ENCODE measurements at regions of chr12 and their contacts with region 1.

Region 1: DNA sequence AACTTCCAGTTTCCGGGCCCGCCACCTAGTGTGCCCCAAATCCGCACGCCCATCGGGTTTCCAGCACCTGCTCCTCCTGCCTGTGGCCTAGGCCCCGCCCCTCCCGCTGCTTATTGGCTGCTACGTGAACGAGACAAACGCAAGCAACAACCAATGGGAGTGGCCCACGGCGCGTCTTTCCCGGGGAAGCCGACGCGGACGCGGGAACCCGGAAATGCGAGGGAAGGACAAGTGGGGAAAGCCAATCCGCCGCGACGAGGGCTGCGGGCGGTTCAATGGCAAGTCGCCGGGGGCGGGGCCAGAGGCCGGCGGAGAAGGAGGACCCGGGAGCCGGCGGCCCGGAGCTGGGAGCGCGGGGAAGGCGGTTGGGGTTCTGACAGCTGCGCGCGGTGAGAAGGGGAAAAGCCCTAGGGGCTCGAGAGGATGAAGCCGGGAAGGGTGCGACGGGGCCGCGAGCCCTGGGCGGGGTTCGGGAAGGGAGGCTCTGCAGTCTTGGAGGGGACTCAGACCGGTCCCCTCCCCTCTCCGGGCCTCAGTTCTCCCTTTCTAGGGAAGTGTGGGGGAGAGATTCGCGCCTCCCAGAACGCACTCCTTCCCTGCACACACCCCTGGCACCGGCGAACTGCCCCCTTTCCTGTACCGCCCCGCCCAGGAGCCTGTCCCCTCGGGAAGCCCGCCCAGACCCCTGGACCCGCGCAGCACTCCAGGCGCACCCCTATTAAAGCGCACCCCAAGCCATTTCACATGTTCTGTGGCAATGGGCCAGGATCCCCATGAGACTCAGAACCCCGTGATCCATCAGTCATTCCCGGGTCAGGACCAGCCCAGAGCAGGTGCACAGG is at the start of gene FICD:
- DNase-seq: peak; percentile 100
- H3K4me3 Mint-ChIP-seq: peak within 1 kb of the TSS; percentile 88
- H3K27ac Mint-ChIP-seq: peak within 1 kb of the TSS; percentile 84
- H3K4me1 Mint-ChIP-seq: peaks cover 34% of the 10 kb centered on the region
- H3K27me3 Mint-ChIP-seq: no peaks in the 10 kb centered on the region
- total RNA-seq, gene FICD: 5.7 to 6.0 TPM

Region 2: GRCh38 chr12:107685360-107686248 is 829.6 kb before region 1 on chr12 and contains the start of gene PWP1:
- CTCF ChIA-PET with region 1: no interaction called
- POLR2A ChIA-PET with region 1: no interaction called
- intact Hi-C with region 1: loop called (anchors 5 kb)
- DNase-seq: peak; percentile 96
- H3K4me3 Mint-ChIP-seq: peak within 1 kb of the TSS; percentile 92
- H3K27ac Mint-ChIP-seq: peak within 1 kb of the TSS; percentile 98
- H3K4me1 Mint-ChIP-seq: peaks cover 25% of the 10 kb centered on the region
- H3K27me3 Mint-ChIP-seq: peaks cover 1% of the 10 kb centered on the region
- total RNA-seq, gene PWP1: 44.0 to 47.0 TPM

Region 3: GRCh38 chr12:107912421-107913004 is 602.7 kb before region 1 on chr12:
- CTCF ChIA-PET with region 1: no interaction called
- POLR2A ChIA-PET with region 1: no interaction called
- intact Hi-C with region 1: loop called (anchors 5 kb)
- DNase-seq: peak; percentile 75
- H3K4me3 Mint-ChIP-seq: peak overlapping the region; percentile 71
- H3K27ac Mint-ChIP-seq: no peak overlapping the region
- H3K4me1 Mint-ChIP-seq: peaks cover 4% of the 10 kb centered on the region
- H3K27me3 Mint-ChIP-seq: peaks cover 22% of the 10 kb centered on the region

Region 4: GRCh38 chr12:108337235-108338223 is 177.7 kb before region 1 on chr12:
- CTCF ChIA-PET with region 1: interaction called, 3 read pairs
- POLR2A ChIA-PET with region 1: no interaction called
- intact Hi-C with region 1: loop called (anchors 10 kb)
- DNase-seq: peak; percentile 12
- H3K4me3 Mint-ChIP-seq: no peak overlapping the region
- H3K27ac Mint-ChIP-seq: no peak overlapping the region
- H3K4me1 Mint-ChIP-seq: peaks cover 3% of the 10 kb centered on the region
- H3K27me3 Mint-ChIP-seq: peaks cover 12% of the 10 kb centered on the region

Region 5: GRCh38 chr12:108482717-108483212 is 32.4 kb before region 1 on chr12:
- CTCF ChIA-PET with region 1: no interaction called
- POLR2A ChIA-PET with region 1: no interaction called
- intact Hi-C with region 1: no loop called
- DNase-seq: no peak
- H3K4me3 Mint-ChIP-seq: no peak overlapping the region
- H3K27ac Mint-ChIP-seq: no peak overlapping the region
- H3K4me1 Mint-ChIP-seq: no peaks in the 10 kb centered on the region
- H3K27me3 Mint-ChIP-seq: peaks cover 29% of the 10 kb centered on the region

Region 6: GRCh38 chr12:108618079-108618952 is 103.1 kb after region 1 on chr12:
- CTCF ChIA-PET with region 1: interaction called, 5 read pairs
- POLR2A ChIA-PET with region 1: no interaction called
- intact Hi-C with region 1: loop called (anchors 2 kb)
- DNase-seq: peak; percentile 84
- H3K4me3 Mint-ChIP-seq: no peak overlapping the region
- H3K27ac Mint-ChIP-seq: peak overlapping the region; percentile 25
- H3K4me1 Mint-ChIP-seq: peaks cover 54% of the 10 kb centered on the region
- H3K27me3 Mint-ChIP-seq: no peaks in the 10 kb centered on the region

Region 7: DNA sequence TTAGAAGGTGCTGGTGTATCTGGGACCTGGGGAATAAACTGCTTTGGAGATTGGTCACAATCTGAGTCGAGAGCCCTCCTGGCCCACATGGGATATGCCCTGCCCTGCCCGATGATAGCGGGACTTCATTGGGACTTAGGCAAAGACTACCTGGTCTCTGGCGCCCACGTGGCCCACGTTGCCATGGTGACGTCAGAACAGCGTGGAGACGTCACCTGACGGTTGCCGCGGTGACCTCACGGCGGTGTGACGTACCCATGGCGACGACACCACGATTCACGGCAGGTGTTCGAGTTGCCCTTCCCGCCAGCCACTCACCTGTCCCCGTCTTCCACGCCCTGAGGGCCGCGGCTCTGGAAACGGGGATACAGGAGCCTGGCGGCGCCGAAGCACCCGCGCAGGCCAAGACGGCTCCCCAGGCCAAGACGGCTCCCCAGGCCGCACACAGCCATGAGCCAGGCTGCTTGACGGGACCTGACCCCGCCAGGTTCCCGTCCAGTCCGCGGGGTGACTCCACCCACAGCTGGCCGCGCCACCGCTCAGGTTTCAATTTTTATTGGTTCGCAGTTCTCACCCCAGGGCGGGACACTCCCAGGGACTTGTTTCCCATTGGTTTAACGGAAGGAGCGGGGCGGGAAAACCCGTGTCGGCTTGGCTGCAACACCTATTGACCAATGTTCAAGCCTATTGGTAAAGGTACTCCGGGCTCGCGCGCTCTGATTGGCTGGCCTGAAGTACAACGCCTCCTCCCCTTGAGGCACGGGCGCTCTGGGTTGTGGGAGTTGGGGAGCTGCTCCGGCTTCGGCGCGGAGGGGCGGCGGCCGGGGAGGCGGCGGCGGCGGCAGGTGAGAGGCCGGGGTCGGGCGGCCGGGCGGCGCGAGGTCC is 1058.1 kb after region 1 on chr12 and contains the starts of genes MMAB and MVK:
- CTCF ChIA-PET with region 1: no interaction called
- POLR2A ChIA-PET with region 1: no interaction called
- intact Hi-C with region 1: loop called (anchors 5 kb)
- DNase-seq: peak; percentile 100
- H3K4me3 Mint-ChIP-seq: peak within 1 kb of the TSS; percentile 86
- H3K27ac Mint-ChIP-seq: peak within 1 kb of the TSS; percentile 85
- H3K4me1 Mint-ChIP-seq: peaks cover 27% of the 10 kb centered on the region
- H3K27me3 Mint-ChIP-seq: no peaks in the 10 kb centered on the region
- total RNA-seq, gene MMAB: 42.4 to 48.3 TPM
- total RNA-seq, gene MVK: 21.2 TPM

Measured in activated CD4-positive, alpha-beta memory T cell treated with anti-CD3 and anti-CD28 coated beads for 36 hours (primary cell).